IMR-90 (cell line): ENCODE measurements at regions of chr6 and their contacts with region 1.

Region 1: GRCh38 chr6:21593412-21593926 is at the start of gene SOX4:
- DNase-seq: peak; percentile 98
- ATAC-seq: peak; percentile 79
- H3K4me3 ChIP-seq: peak within 1 kb of the TSS; percentile 84
- H3K27ac ChIP-seq: peak within 1 kb of the TSS; percentile 90
- H3K4me1 ChIP-seq: no peaks in the 10 kb centered on the region
- H3K27me3 ChIP-seq: no peaks in the 10 kb centered on the region
- CTCF ChIP-seq: no peak
- POLR2A ChIP-seq: peak; percentile 98
- RAD21 ChIP-seq: no peak; the same call in 1 of the 2 replicates
- total RNA-seq, gene SOX4: 4.7 and 6.4 TPM in 2 replicates

Region 2: GRCh38 chr6:20401205-20402091 is 1192.0 kb before region 1 on chr6 and contains the start of gene E2F3:
- CTCF ChIA-PET with region 1: no interaction called
- POLR2A ChIA-PET with region 1: no interaction called
- dilution Hi-C with region 1: no loop called
- in situ Hi-C with region 1: no loop called
- intact Hi-C with region 1: loop called (anchors 5 kb)
- DNase-seq: peak; percentile 100
- ATAC-seq: peak; percentile 83
- H3K4me3 ChIP-seq: peak within 1 kb of the TSS; percentile 86
- H3K27ac ChIP-seq: peak within 1 kb of the TSS; percentile 84
- H3K4me1 ChIP-seq: no peaks in the 10 kb centered on the region
- H3K27me3 ChIP-seq: no peaks in the 10 kb centered on the region
- CTCF ChIP-seq: no peak
- POLR2A ChIP-seq: peak; percentile 83
- RAD21 ChIP-seq: no peak
- total RNA-seq, gene E2F3: 2.3 and 3.3 TPM in 2 replicates

Region 3: GRCh38 chr6:20933057-20933788 is 660.2 kb before region 1 on chr6:
- CTCF ChIA-PET with region 1: no interaction called
- POLR2A ChIA-PET with region 1: no interaction called
- dilution Hi-C with region 1: no loop called
- in situ Hi-C with region 1: no loop called
- intact Hi-C with region 1: loop called (anchors 1 kb)
- DNase-seq: no peak
- ATAC-seq: no peak
- H3K4me3 ChIP-seq: no peak overlapping the region
- H3K27ac ChIP-seq: no peak overlapping the region
- H3K4me1 ChIP-seq: peaks cover 7% of the 10 kb centered on the region
- H3K27me3 ChIP-seq: no peaks in the 10 kb centered on the region
- CTCF ChIP-seq: no peak
- POLR2A ChIP-seq: no peak
- RAD21 ChIP-seq: no peak

Region 4: DNA sequence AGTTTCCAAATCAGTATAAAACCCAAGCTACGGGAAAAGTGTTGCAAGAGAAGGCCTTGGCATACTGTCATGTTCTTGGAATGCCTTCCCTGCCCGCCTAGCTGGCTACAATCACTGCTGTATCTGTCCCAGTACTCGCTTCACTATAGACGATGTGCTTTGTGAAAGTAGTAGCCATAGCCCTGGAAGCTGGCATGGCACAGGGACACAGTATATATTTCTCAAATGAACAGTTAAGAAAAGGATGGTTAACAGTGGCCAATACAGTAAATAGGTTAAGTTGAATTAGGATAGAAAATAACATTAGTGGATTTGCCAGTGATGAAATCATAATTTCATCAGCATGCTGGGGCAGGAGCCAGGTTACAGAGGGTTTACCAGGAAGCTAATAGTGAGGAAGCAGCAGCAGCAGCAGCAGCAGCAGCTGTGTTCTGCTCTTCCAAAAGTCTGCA is 559.9 kb before region 1 on chr6:
- CTCF ChIA-PET with region 1: no interaction called
- POLR2A ChIA-PET with region 1: no interaction called
- dilution Hi-C with region 1: no loop called
- in situ Hi-C with region 1: no loop called
- intact Hi-C with region 1: no loop called
- DNase-seq: peak; percentile 85
- ATAC-seq: peak; percentile 92
- H3K4me3 ChIP-seq: no peak overlapping the region; the same call in 1 of the 2 replicates
- H3K27ac ChIP-seq: peak overlapping the region; percentile 85; the same call in 1 of the 2 replicates
- H3K4me1 ChIP-seq: peaks cover 5% of the 10 kb centered on the region; the same call in 1 of the 2 replicates
- H3K27me3 ChIP-seq: no peaks in the 10 kb centered on the region
- CTCF ChIP-seq: no peak
- POLR2A ChIP-seq: no peak
- RAD21 ChIP-seq: no peak

Region 5: DNA sequence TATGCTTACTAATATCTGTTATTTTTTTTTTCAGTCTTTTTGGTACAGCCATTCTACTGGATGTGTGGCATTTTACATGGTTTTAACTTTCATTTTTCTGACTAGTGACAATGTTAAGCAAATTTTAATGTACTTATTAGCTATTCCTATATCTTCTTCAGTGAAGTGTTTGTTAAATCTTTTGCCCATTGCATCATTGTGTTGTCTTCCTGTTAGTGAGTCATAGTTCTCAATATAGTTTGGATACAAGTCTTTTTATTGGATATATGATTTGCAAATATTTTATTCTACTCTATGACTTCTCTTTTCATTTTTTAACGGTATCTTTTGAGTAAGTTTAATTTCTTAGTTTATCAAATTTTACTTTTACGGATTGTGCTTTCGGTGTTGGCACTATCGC is 539.9 kb before region 1 on chr6:
- CTCF ChIA-PET with region 1: no interaction called
- POLR2A ChIA-PET with region 1: no interaction called
- dilution Hi-C with region 1: no loop called
- in situ Hi-C with region 1: no loop called
- intact Hi-C with region 1: no loop called
- DNase-seq: peak; percentile 37
- ATAC-seq: no peak
- H3K4me3 ChIP-seq: no peak overlapping the region
- H3K27ac ChIP-seq: no peak overlapping the region
- H3K4me1 ChIP-seq: no peaks in the 10 kb centered on the region
- H3K27me3 ChIP-seq: no peaks in the 10 kb centered on the region
- CTCF ChIP-seq: no peak
- POLR2A ChIP-seq: no peak
- RAD21 ChIP-seq: no peak

Region 6: DNA sequence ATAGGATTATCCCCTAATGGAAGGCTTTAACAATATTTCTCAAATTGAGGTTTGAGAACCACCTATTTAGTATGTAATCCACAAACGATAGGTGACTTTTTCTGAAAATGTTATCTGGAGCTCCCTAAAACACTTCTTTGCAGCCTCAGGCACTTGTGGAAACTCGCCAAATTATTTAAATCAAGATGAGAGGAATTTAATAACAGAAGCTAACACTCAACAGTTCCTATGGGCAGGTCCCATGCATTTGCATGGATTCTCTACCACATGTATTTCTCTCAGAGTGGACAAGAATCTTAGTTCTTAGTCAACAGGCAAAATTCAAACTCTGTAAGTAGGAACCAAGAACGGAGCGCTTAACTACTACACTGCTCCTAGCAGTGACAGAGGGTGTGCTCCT is 20.8 kb after region 1 on chr6:
- CTCF ChIA-PET with region 1: no interaction called
- POLR2A ChIA-PET with region 1: interaction called, 12 read pairs
- dilution Hi-C with region 1: no loop called
- in situ Hi-C with region 1: no loop called
- intact Hi-C with region 1: no loop called
- DNase-seq: no peak
- ATAC-seq: no peak
- H3K4me3 ChIP-seq: no peak overlapping the region
- H3K27ac ChIP-seq: no peak overlapping the region
- H3K4me1 ChIP-seq: no peaks in the 10 kb centered on the region
- H3K27me3 ChIP-seq: no peaks in the 10 kb centered on the region
- CTCF ChIP-seq: no peak
- POLR2A ChIP-seq: no peak
- RAD21 ChIP-seq: no peak

Region 7: GRCh38 chr6:21800948-21801438 is 207.5 kb after region 1 on chr6:
- CTCF ChIA-PET with region 1: no interaction called
- POLR2A ChIA-PET with region 1: interaction called, 17 read pairs
- dilution Hi-C with region 1: no loop called
- in situ Hi-C with region 1: no loop called
- intact Hi-C with region 1: loop called (anchors 5 kb)
- DNase-seq: peak; percentile 67
- ATAC-seq: peak; percentile 77
- H3K4me3 ChIP-seq: no peak overlapping the region
- H3K27ac ChIP-seq: no peak overlapping the region
- H3K4me1 ChIP-seq: peaks cover 10% of the 10 kb centered on the region
- H3K27me3 ChIP-seq: no peaks in the 10 kb centered on the region
- CTCF ChIP-seq: no peak
- POLR2A ChIP-seq: no peak
- RAD21 ChIP-seq: no peak

Region 8: GRCh38 chr6:22071270-22072041 is 478.0 kb after region 1 on chr6:
- CTCF ChIA-PET with region 1: no interaction called
- POLR2A ChIA-PET with region 1: no interaction called
- dilution Hi-C with region 1: no loop called
- in situ Hi-C with region 1: no loop called
- intact Hi-C with region 1: loop called (anchors 10 kb)
- DNase-seq: peak; percentile 66
- ATAC-seq: peak; percentile 80
- H3K4me3 ChIP-seq: peak overlapping the region; percentile 27
- H3K27ac ChIP-seq: peak overlapping the region; percentile 87
- H3K4me1 ChIP-seq: peaks cover 7% of the 10 kb centered on the region; the same call in 1 of the 2 replicates
- H3K27me3 ChIP-seq: no peaks in the 10 kb centered on the region
- CTCF ChIP-seq: no peak
- POLR2A ChIP-seq: no peak
- RAD21 ChIP-seq: no peak

Region 9: GRCh38 chr6:22737331-22737730 is 1143.9 kb after region 1 on chr6:
- CTCF ChIA-PET with region 1: no interaction called
- POLR2A ChIA-PET with region 1: no interaction called
- dilution Hi-C with region 1: no loop called
- in situ Hi-C with region 1: no loop called
- intact Hi-C with region 1: loop called (anchors 2 kb)
- DNase-seq: peak; percentile 53
- ATAC-seq: peak; percentile 63
- H3K4me3 ChIP-seq: no peak overlapping the region
- H3K27ac ChIP-seq: no peak overlapping the region
- H3K4me1 ChIP-seq: no peaks in the 10 kb centered on the region; the same call in 1 of the 2 replicates
- H3K27me3 ChIP-seq: no peaks in the 10 kb centered on the region
- CTCF ChIP-seq: peak; percentile 49
- POLR2A ChIP-seq: no peak
- RAD21 ChIP-seq: peak; percentile 64